ENCODE measurements at regions of chr12 and their contacts with region 1.

Region 1: GRCh38 chr12:53213348-53213747 is 6.3 kb upstream of the ITGB7 start:
- DNase-seq: peak; percentile 93
- ATAC-seq: peak; percentile 85

Region 2: GRCh38 chr12:53287741-53288216 is 74.4 kb after region 1 on chr12:
- intact Hi-C with region 1: loop called (anchors 2 kb)
- DNase-seq: peak; percentile 77
- ATAC-seq: peak; percentile 89

Measured in Right ventricle myocardium superior (tissue), 1 donor.